HEK293 (cell line): ENCODE measurements at regions of chr1 and their contacts with region 1.

Region 1: DNA sequence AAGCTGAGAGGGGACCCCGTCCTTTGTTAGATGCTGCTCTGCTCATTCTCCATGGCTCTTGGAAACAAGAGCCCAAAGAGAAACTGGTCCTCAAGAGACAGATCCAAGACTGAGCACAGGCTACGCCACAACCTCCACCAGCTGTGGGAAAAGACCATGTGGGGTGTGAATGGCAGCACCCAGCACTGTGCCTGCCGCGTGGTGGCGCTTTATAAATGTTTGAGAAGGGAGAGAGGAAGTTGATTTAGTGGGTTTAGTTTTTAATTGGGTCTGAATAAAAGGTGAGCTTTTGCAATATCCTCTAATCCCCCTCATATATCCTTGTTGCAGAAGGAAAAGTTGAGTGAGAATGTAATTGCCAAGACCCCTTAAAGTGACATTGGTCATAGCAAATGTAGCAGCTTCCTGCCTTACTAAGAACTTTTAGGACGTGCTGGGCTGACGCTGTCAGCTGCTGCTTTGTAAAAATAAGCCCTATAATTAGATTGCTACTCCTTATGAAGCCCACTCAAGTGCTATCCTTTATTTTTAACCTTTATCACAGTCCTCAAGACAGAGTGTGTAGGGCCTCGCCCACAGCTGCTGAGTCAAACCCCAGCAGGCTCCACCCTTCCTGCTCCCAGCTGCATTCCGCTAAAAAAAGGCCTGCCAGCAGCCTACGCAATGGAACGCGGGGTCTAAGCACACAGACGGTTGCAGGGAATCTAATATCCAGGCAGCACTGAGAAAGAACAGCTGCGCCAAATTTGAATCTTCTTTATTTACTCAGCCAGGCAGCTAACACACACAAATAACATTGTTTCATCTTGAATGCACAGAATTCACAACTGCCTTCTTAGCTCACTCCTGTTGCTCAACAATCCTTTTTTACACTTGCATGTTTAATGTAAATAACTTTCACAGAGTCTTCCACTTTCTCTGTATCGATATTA is 47.4 kb upstream of the PRDX6 start:
- H3K4me3 ChIP-seq: no peak overlapping the region
- H3K27ac ChIP-seq: no peak overlapping the region
- H3K4me1 ChIP-seq: no peaks in the 10 kb centered on the region
- CTCF ChIP-seq: no peak

Region 2: GRCh38 chr1:173496757-173497323 is 67.1 kb after region 1 on chr1:
- CTCF ChIA-PET with region 1: no interaction called
- POLR2A ChIA-PET with region 1: no interaction called
- H3K4me3 ChIP-seq: no peak overlapping the region
- H3K27ac ChIP-seq: no peak overlapping the region
- H3K4me1 ChIP-seq: no peaks in the 10 kb centered on the region
- CTCF ChIP-seq: no peak

Region 3: GRCh38 chr1:173536254-173536653 is 106.5 kb after region 1 on chr1:
- CTCF ChIA-PET with region 1: interaction called, 10 read pairs
- POLR2A ChIA-PET with region 1: no interaction called
- H3K4me3 ChIP-seq: no peak overlapping the region
- H3K27ac ChIP-seq: no peak overlapping the region
- H3K4me1 ChIP-seq: no peaks in the 10 kb centered on the region
- CTCF ChIP-seq: no peak